Activated naive CD8-positive, alpha-beta T cell treated with anti-CD3 and anti-CD28 coated beads, Interleukin-2, amount 10 ng/mL, durations not matched to agents 7 days and 5 days (primary cell): ENCODE measurements at regions of chr10 and their contacts with region 1.

Region 1: GRCh38 chr10:17228091-17228940 is at the start of gene VIM:
- DNase-seq: peak; percentile 87
- ATAC-seq: peak; percentile 43
- H3K4me3 Mint-ChIP-seq: peak within 1 kb of the TSS; percentile 91
- H3K27ac Mint-ChIP-seq: peak within 1 kb of the TSS; percentile 94
- H3K4me1 Mint-ChIP-seq: peaks cover 41% of the 10 kb centered on the region
- H3K27me3 Mint-ChIP-seq: no peaks in the 10 kb centered on the region
- total RNA-seq, gene VIM: 1,681 to 1,738 TPM

Region 2: GRCh38 chr10:16891375-16892313 is 336.7 kb before region 1 on chr10:
- POLR2A ChIA-PET with region 1: interaction called, 29 read pairs
- DNase-seq: peak; percentile 49
- ATAC-seq: peak; percentile 90
- H3K4me3 Mint-ChIP-seq: peak overlapping the region; percentile 82
- H3K27ac Mint-ChIP-seq: peak overlapping the region; percentile 72
- H3K4me1 Mint-ChIP-seq: peaks cover 13% of the 10 kb centered on the region
- H3K27me3 Mint-ChIP-seq: no peaks in the 10 kb centered on the region

Region 3: GRCh38 chr10:17023386-17024298 is 204.7 kb before region 1 on chr10:
- POLR2A ChIA-PET with region 1: interaction called, 118 read pairs
- DNase-seq: peak; percentile 39
- ATAC-seq: peak; percentile 70
- H3K4me3 Mint-ChIP-seq: peak overlapping the region; percentile 86
- H3K27ac Mint-ChIP-seq: peak overlapping the region; percentile 97
- H3K4me1 Mint-ChIP-seq: peaks cover 48% of the 10 kb centered on the region
- H3K27me3 Mint-ChIP-seq: no peaks in the 10 kb centered on the region

Region 4: DNA sequence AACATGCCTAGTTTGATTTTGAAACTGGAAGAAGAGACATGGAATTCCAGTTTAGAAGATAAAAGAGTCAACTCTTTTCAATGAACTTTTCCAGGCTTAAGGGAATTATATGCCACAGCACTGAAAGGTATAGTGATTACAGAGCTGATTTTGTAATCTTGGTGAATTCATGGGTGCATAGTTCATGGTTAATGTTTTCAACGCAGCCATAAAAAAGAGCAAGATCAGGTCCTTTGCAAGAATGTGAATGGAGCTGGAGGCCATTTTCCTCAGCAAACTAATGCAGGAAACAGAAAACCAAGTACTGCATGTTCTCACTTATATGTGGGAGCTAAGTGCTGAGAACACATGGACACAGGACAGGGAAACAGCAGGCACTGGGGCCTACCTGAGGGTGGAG is 192.9 kb before region 1 on chr10:
- POLR2A ChIA-PET with region 1: interaction called, 39 read pairs
- DNase-seq: no peak
- ATAC-seq: no peak
- H3K4me3 Mint-ChIP-seq: no peak overlapping the region
- H3K27ac Mint-ChIP-seq: no peak overlapping the region
- H3K4me1 Mint-ChIP-seq: peaks cover 51% of the 10 kb centered on the region
- H3K27me3 Mint-ChIP-seq: no peaks in the 10 kb centered on the region

Region 5: DNA sequence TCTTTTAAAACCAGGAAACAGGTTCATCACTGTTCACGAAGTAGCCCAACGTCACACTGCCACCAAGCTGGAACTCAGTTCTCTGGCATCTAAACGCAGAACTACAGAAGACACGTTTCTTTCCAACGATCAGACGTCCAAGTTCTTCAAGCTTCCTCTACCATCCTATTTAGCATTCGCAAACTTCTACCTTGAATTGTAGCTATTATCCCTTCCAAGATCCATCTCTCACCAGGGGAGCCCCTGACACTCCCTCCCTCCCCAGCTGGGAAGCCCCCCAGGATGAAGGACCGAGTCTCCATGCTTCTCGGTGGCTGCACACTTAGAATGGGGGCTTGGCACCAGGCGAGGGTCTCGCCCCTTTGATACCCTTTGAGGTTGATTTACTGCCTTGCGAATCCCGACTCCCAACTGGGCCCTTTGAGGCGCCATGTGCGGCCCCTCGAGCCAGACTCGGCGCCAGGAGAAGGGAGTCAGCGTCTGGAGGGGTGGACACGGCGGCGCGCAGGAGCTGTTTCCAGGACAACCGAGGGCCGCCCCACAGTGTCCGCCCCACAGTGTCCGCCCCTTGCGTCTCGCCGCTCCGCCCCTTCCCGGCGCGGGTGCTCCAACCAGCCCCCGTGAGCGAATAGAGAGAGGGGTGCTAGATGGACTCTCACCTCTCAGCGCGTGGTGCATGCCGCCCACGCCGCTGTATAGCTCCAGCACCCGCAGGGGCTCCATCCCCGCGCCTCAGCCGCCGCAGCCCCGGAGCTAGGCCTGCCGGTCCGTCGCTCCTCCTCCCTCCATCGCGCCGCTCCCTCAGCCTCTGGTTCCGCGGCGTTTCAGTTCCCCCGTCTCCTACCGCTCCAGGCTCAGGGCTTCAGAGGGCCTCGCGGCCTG is 27.2 kb before region 1 on chr10 and contains the start of gene TRDMT1:
- POLR2A ChIA-PET with region 1: interaction called, 337 read pairs
- DNase-seq: peak; percentile 86
- ATAC-seq: peak; percentile 93
- H3K4me3 Mint-ChIP-seq: peak within 1 kb of the TSS; percentile 91
- H3K27ac Mint-ChIP-seq: peak within 1 kb of the TSS; percentile 84
- H3K4me1 Mint-ChIP-seq: peaks cover 44% of the 10 kb centered on the region
- H3K27me3 Mint-ChIP-seq: no peaks in the 10 kb centered on the region
- total RNA-seq, gene TRDMT1: 15.3 to 17.1 TPM

Region 6: DNA sequence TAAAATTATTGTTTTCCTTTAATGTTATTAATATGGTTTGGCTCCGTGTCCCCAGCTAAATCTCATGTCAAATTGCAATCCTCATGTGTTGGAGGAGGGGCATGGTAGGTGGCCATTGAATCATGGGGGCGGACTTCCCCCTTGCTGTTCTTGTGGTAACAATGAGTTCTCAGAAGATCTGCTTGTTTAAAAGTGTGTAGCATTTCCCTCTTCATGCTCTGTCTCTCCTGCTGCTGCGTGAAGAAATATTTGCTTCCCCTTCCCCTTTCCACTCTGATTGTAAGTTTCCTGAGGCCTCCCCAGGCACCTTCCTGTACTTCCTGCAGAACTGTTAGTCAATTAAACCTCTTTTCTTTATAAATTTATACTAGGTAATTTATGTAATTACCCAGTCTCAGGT is 27.2 kb after region 1 on chr10:
- POLR2A ChIA-PET with region 1: no interaction called
- DNase-seq: no peak
- ATAC-seq: no peak
- H3K4me3 Mint-ChIP-seq: no peak overlapping the region
- H3K27ac Mint-ChIP-seq: no peak overlapping the region
- H3K4me1 Mint-ChIP-seq: peaks cover 8% of the 10 kb centered on the region
- H3K27me3 Mint-ChIP-seq: peaks cover 2% of the 10 kb centered on the region